Calu3 (cell line): ENCODE measurements at regions of chr3 and their contacts with region 1.

Region 1: DNA sequence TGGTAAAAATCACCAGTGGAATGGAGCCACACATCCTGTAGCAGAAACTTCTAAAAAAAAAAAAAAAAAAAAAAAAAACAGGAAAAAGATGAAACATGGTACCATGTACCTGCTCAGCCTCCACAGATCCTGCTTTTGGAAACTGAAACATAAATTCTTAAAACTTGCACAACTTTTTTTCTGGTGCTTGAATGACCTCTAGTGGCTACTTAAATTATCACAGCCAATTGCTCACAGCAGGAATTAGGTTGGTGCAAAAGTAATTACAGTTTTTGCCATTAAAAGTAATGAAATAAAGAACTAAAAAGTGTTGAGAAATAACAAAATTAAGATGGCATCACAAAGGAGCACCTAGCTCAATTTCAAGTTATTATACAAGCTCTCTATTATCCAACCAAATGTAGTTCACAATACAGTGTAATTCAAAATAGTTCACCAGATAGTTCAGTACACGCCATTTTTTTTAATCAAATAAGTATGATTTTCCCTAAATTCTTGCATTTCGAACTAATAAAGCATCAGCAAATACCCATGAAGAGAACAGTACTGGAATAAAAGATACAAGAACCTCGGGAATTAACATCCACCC is 80.6 kb downstream of the ULK4 start:
- DNase-seq: peak; percentile 12
- H3K4me3 Mint-ChIP-seq: no peak overlapping the region
- H3K27ac Mint-ChIP-seq: no peak overlapping the region
- H3K4me1 Mint-ChIP-seq: no peaks in the 10 kb centered on the region
- H3K27me3 Mint-ChIP-seq: no peaks in the 10 kb centered on the region
- CTCF ChIP-seq: peak; percentile 30

Region 2: GRCh38 chr3:42403737-42404136 is 522.4 kb after region 1 on chr3:
- CTCF ChIA-PET with region 1: interaction called, 13 read pairs
- intact Hi-C with region 1: no loop called
- DNase-seq: no peak
- H3K4me3 Mint-ChIP-seq: no peak overlapping the region
- H3K27ac Mint-ChIP-seq: no peak overlapping the region
- H3K4me1 Mint-ChIP-seq: no peaks in the 10 kb centered on the region
- H3K27me3 Mint-ChIP-seq: peaks cover 20% of the 10 kb centered on the region
- CTCF ChIP-seq: no peak